ENCODE measurements at regions of chr17 and their contacts with region 1.

Region 1: GRCh38 chr17:45852535-45853297 is 8.0 kb downstream of the SPPL2C start:
- DNase-seq: peak; percentile 57 to 70
- ATAC-seq: peak; percentile 25 to 73; a peak in 4 of 6 replicates
- H3K4me3 ChIP-seq: peak overlapping the region; percentile 14; the same call in 1 of the 3 replicates
- H3K27ac ChIP-seq: peak overlapping the region in 1 of 2 experiments; percentile 61; a peak in 1 of 6 replicates
- H3K4me1 ChIP-seq: 0 out of 3 replicates have a peak, but pooled peaks cover 2% of the 10 kb centered on the region
- CTCF ChIP-seq: peak; percentile 97
- EP300 ChIP-seq: no peak
- POLR2A ChIP-seq: no peak
- RAD21 ChIP-seq: peak; percentile 94 to 95

Region 2: DNA sequence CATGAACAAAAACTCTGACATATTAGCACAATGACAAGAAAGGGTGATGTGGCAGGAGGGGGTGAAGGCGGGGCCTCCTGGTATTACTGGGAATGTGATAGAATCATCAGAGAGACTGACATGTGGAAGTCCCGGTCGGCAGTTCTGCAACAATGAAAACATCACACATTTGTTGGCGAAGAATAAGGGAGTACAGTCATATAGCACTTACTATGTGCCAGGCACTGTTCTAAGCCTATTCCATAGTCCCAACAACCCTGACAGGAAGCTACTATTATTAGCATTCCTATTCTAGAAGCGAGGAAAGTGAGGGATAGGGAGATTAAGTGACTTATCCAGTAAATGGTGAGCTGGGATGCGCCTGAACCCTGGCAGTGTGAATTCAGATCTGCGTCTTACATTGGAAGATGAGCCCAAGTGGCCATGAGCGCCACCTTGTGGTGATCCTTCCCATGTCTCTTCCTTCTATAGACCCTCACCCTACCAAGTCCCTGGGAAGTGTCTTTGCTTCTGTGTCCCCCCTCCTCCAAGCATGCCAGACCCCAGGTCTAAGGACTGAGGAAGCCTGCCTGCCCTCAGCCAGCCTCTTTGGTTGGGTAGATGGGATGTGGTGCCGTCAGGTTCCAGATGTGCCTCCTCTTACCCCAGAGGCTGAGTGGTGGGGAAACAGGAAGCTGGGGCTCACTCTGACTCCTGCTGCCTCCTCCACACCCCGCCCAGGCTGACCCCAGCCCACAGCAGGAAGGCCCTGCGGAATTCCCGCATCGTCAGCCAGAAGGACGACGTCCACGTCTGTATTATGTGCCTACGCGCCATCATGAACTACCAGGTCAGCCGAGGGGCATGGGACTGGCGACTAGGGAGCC is 617.1 kb before region 1 on chr17:
- CTCF ChIA-PET with region 1: no interaction called
- POLR2A ChIA-PET with region 1: no interaction called
- DNase-seq: peak; percentile 87 to 93
- ATAC-seq: peak; percentile 60 to 75
- H3K4me3 ChIP-seq: no peak overlapping the region
- H3K27ac ChIP-seq: peak overlapping the region; percentile 35 to 66; a peak in 5 of 6 replicates
- H3K4me1 ChIP-seq: peaks cover 33% of the 10 kb centered on the region
- CTCF ChIP-seq: peak; percentile 95
- EP300 ChIP-seq: no peak
- POLR2A ChIP-seq: no peak
- RAD21 ChIP-seq: peak; percentile 79 to 82

Region 3: DNA sequence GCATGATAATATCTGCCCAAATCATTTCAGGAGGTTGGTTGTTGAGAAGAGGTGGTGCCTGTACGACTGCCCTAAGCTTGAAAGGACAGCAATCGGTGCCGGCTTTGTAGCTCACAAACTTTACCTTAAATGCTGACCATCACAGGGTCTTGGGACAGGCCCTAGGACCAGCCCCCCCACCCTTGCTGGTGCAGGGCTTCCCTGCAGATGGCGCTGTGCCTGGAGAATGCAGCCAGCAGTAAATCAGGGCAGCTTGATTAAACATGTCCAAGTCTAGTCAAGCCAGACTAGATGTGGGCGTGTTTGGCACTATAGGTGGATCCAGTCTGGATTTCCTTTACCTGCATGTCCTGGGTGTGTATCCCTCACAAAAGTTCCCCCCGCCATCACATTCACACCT is 204.1 kb before region 1 on chr17:
- CTCF ChIA-PET with region 1: interaction called, 136 read pairs
- POLR2A ChIA-PET with region 1: no interaction called
- DNase-seq: no peak
- ATAC-seq: peak in 1 of 2 experiments; percentile 61; a peak in 3 of 6 replicates
- H3K4me3 ChIP-seq: no peak overlapping the region
- H3K27ac ChIP-seq: no peak overlapping the region
- H3K4me1 ChIP-seq: no peaks in the 10 kb centered on the region
- CTCF ChIP-seq: no peak
- EP300 ChIP-seq: no peak
- POLR2A ChIP-seq: no peak
- RAD21 ChIP-seq: no peak

Region 4: DNA sequence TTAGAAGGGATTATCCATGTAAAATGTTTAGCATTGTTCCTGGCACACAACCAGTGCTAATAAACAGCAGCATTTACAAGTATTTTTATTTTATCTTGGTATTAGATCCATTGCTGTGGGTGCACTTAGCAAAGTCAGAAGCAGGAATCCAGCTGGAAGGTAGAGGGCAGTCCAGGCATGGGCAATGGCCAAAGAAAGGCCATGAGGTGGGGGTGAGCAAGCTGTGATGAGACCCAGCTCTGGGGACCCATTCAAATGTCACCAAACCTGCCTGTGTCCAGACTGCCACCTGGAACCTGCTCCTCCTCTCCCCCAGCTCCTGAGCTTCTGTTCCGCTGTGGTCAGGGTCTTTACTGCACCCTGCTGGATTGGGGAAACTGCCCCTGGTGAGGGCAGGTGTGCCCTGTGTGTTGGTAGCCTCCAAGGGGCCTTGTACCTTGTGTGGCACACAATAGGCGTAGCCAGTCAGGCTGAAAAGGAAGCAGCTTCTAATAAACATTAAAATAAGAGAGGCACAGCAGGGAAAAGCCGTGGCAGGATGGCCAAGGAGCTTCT is 186.6 kb before region 1 on chr17:
- CTCF ChIA-PET with region 1: interaction called, 17 read pairs
- POLR2A ChIA-PET with region 1: no interaction called
- DNase-seq: no peak
- ATAC-seq: peak in 1 of 2 experiments; percentile 43; a peak in 4 of 6 replicates
- H3K4me3 ChIP-seq: no peak overlapping the region
- H3K27ac ChIP-seq: no peak overlapping the region
- H3K4me1 ChIP-seq: no peaks in the 10 kb centered on the region
- CTCF ChIP-seq: peak; percentile 24; the same call in 1 of the 3 replicates
- EP300 ChIP-seq: no peak
- POLR2A ChIP-seq: no peak
- RAD21 ChIP-seq: peak; percentile 56 to 57

Region 5: DNA sequence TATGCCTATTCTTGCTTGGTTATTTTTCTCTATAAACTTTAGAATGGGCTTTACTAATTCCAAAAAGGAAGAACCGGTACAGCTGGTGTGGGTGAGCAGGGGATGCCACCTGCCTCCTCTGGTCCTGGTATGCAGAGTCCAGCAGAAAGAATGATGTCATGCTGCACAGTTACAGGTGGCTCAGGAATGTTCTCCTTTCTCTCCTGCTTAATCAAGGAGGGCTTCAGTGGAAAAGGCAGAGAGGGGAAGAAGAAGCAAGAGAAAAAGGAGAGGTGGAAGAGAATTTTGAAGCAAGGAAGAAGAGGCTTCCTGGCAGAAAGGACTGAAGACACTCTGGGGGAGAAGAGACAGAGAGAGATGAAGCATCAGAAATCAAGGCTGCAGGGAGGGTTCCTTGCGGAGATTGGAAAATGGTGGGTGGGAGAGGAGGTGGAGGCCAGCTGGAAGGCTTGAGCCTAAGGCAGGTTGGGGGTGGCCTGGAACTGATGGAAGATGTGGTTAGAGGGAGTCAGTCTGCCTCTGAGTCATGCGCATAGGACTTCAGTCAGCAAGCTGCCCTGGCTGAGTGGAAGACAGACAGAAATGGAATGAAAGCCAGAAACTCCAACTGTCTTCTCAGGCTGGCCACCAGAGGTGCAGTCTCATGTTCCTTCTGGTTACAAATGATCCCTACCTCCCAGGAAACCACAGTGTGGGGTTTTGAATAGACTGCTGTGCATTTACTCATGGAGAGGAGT is 133.2 kb before region 1 on chr17:
- CTCF ChIA-PET with region 1: interaction called, 17 read pairs
- POLR2A ChIA-PET with region 1: no interaction called
- DNase-seq: peak; percentile 77 to 82
- ATAC-seq: peak; percentile 89 to 93
- H3K4me3 ChIP-seq: no peak overlapping the region
- H3K27ac ChIP-seq: no peak overlapping the region
- H3K4me1 ChIP-seq: peaks cover 5% of the 10 kb centered on the region; the same call in 2 of the 3 replicates
- CTCF ChIP-seq: 0 out of 3 replicates have a peak, but pooled peaks have one; percentile 24
- EP300 ChIP-seq: no peak
- POLR2A ChIP-seq: no peak
- RAD21 ChIP-seq: peak in 1 of 2 experiments; percentile 21; a peak in 1 of 5 replicates

Region 6: GRCh38 chr17:45841883-45842525 is 10.7 kb before region 1 on chr17:
- CTCF ChIA-PET with region 1: interaction called, 225 read pairs
- POLR2A ChIA-PET with region 1: no interaction called
- DNase-seq: no peak
- ATAC-seq: no peak
- H3K4me3 ChIP-seq: no peak overlapping the region
- H3K27ac ChIP-seq: no peak overlapping the region
- H3K4me1 ChIP-seq: no peaks in the 10 kb centered on the region
- CTCF ChIP-seq: no peak
- EP300 ChIP-seq: no peak
- POLR2A ChIP-seq: no peak
- RAD21 ChIP-seq: no peak

Region 7: DNA sequence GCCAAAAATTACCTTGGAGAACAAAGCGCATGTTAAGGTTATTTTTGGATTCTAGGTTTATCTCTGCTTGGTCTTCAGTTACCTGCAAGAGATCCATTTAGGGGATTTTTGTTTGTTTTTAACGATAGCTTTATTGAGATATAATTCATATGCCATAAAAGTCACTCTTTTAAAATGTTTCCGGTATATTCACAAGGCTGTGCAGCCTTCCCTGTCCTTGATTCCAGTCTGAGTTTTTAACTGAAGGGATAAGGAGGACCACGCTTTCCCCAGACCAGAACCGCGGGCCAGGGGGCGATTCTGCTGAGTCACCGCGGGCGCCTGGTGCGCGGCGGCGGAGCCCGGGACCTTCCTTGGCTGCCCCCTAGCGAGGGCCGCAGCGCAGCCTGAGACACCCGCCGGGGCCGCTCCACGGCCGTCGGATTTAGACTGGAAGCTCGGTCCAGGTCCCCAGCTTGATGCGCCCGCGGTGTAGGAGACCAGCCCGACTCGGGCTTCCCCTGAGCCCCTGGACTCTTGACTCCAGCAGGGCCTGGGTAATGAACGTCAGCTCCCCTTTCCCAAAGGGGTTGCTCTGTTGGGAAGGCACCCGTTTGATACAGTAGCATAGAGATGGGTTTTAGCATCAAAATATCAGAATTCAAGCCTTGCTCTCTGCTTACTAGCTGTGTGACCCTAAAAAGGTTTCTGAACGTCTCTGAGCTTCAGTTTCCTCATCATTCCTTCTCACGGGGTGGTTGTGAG is 96.3 kb after region 1 on chr17:
- CTCF ChIA-PET with region 1: interaction called, 10 read pairs
- POLR2A ChIA-PET with region 1: no interaction called
- DNase-seq: peak; percentile 81 to 94
- ATAC-seq: peak; percentile 91 to 99
- H3K4me3 ChIP-seq: 0 out of 3 replicates have a peak overlapping the region, but pooled peaks have one; percentile 7
- H3K27ac ChIP-seq: peak overlapping the region; percentile 88 to 90
- H3K4me1 ChIP-seq: peaks cover 9% of the 10 kb centered on the region
- CTCF ChIP-seq: peak; percentile 90
- EP300 ChIP-seq: no peak
- POLR2A ChIP-seq: 0 out of 2 replicates have a peak, but pooled peaks have one; percentile 6
- RAD21 ChIP-seq: peak; percentile 57 to 76

Region 8: GRCh38 chr17:46044286-46044928 is 191.7 kb after region 1 on chr17:
- CTCF ChIA-PET with region 1: no interaction called
- POLR2A ChIA-PET with region 1: no interaction called
- DNase-seq: peak; percentile 81 to 93
- ATAC-seq: peak; percentile 91 to 96
- H3K4me3 ChIP-seq: no peak overlapping the region
- H3K27ac ChIP-seq: peak overlapping the region; percentile 7 to 45; a peak in 3 of 6 replicates
- H3K4me1 ChIP-seq: peaks cover 23% of the 10 kb centered on the region
- CTCF ChIP-seq: peak; percentile 99
- EP300 ChIP-seq: no peak
- POLR2A ChIP-seq: no peak
- RAD21 ChIP-seq: peak; percentile 89 to 91